ENCODE measurements at regions of chr1 and their contacts with region 1.

Region 1: DNA sequence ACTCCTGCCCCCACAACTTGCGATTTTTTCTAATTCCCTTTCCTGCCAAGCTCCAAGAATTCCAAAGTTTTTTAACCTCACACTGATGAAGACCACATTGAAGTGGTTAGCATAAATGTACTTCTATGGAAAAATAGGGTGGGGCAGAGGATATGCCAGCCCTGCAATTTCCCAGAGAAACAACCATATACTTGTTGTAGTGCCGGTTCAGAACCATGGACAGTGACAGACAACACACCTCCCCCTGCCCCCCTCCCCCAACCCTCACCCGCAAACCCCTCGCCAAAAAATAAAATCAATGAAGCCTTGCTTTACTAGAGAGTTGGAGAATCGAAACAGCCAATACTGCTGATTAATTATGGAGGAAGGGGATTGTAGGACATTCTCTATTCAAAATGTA is 109.5 kb upstream of the GRIK3 start:
- DNase-seq: no peak
- H3K4me3 ChIP-seq: no peak overlapping the region
- H3K27ac ChIP-seq: no peak overlapping the region
- H3K4me1 ChIP-seq: no peaks in the 10 kb centered on the region
- H3K27me3 ChIP-seq: no peaks in the 10 kb centered on the region
- CTCF ChIP-seq: no peak
- EP300 ChIP-seq: no peak
- POLR2A ChIP-seq: no peak

Region 2: GRCh38 chr1:37096466-37096865 is 47.3 kb before region 1 on chr1:
- in situ Hi-C with region 1: no loop called
- intact Hi-C with region 1: no loop called
- DNase-seq: no peak
- H3K4me3 ChIP-seq: no peak overlapping the region
- H3K27ac ChIP-seq: no peak overlapping the region
- H3K4me1 ChIP-seq: no peaks in the 10 kb centered on the region
- H3K27me3 ChIP-seq: peaks cover 9% of the 10 kb centered on the region
- CTCF ChIP-seq: no peak
- EP300 ChIP-seq: no peak
- POLR2A ChIP-seq: no peak

Region 3: DNA sequence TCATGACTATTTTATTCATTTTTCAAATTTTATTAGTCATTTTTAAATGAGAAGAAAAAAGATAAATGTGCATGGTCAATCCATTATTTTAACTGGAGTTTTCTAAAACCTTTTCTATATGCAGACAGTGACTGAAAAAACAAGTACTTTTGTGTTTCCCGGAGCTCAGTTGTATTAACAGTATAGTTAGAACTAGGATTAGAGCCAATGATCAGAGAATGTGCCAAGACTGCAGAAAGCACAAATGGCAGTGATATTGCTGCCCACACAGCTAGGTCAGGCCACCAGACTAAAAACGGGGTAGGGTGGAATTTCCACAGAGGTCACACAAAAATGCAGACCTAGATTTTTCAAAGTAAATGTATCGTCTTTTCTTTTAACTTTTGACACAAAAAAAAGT is 53.6 kb after region 1 on chr1:
- in situ Hi-C with region 1: loop called in 1 of 4 experiments (anchors 10 kb)
- intact Hi-C with region 1: no loop called
- DNase-seq: no peak
- H3K4me3 ChIP-seq: no peak overlapping the region
- H3K27ac ChIP-seq: no peak overlapping the region
- H3K4me1 ChIP-seq: no peaks in the 10 kb centered on the region
- H3K27me3 ChIP-seq: peaks cover 4% of the 10 kb centered on the region
- CTCF ChIP-seq: no peak
- EP300 ChIP-seq: no peak
- POLR2A ChIP-seq: no peak